Activated B cell treated with CpG ODN at 0.5 μM for 24 hours (primary cell): ENCODE measurements at regions of chr12 and their contacts with region 1.

Region 1: GRCh38 chr12:87280356-87280755 is 748.8 kb downstream of the C12orf50 start:
- DNase-seq: no peak
- ATAC-seq: peak; percentile 80
- H3K4me3 Mint-ChIP-seq: peak overlapping the region; percentile 25
- H3K27ac Mint-ChIP-seq: peak overlapping the region; percentile 76
- H3K4me1 Mint-ChIP-seq: peaks cover 10% of the 10 kb centered on the region
- H3K27me3 Mint-ChIP-seq: no peaks in the 10 kb centered on the region
- CTCF ChIP-seq: no peak

Region 2: DNA sequence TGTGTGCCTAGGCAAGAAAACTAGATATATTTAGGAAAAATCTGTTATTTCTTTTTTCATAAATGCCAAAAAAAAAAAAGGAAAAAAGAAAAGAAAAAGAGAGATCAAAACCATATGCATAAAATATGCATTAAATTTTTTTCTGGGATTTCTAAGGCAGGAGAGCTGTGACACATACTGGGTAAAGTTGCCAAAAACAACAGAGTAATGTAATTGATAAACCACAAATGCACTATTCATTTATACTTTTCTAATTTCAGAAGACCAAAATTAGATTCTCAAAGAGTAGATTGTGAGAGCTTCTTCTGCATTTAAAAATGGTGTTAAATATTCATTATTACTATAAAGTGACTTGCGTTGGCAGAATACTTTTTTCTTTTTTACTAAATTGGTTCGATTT is 350.4 kb before region 1 on chr12:
- CTCF ChIA-PET with region 1: no interaction called
- POLR2A ChIA-PET with region 1: no interaction called
- intact Hi-C with region 1: no loop called
- DNase-seq: no peak
- ATAC-seq: no peak
- H3K4me3 Mint-ChIP-seq: no peak overlapping the region
- H3K27ac Mint-ChIP-seq: no peak overlapping the region
- H3K4me1 Mint-ChIP-seq: no peaks in the 10 kb centered on the region
- H3K27me3 Mint-ChIP-seq: no peaks in the 10 kb centered on the region
- CTCF ChIP-seq: no peak

Region 3: DNA sequence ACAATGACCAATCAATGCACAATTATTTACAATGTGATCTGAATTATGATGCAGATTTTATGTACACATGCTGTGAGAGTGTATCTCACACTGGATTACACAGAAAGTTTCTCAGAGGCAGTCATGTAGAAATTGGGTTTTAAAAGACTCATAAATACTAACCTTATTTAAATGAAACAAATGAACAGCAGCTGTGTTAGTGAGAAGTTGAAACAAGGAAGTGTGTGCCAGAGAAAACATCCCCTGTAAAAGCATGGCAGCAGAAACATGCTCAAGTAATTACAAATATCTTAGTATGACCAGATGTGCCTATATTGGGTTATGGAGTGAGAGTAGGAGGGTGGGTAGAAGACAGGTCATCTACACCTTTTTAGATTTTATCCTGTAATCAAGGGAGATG is 25.1 kb after region 1 on chr12:
- CTCF ChIA-PET with region 1: no interaction called
- POLR2A ChIA-PET with region 1: no interaction called
- intact Hi-C with region 1: loop called (anchors 2 kb)
- DNase-seq: no peak
- ATAC-seq: peak; percentile 42
- H3K4me3 Mint-ChIP-seq: no peak overlapping the region
- H3K27ac Mint-ChIP-seq: peak overlapping the region; percentile 24
- H3K4me1 Mint-ChIP-seq: peaks cover 31% of the 10 kb centered on the region
- H3K27me3 Mint-ChIP-seq: no peaks in the 10 kb centered on the region
- CTCF ChIP-seq: no peak

Region 4: GRCh38 chr12:88153959-88154358 is 873.6 kb after region 1 on chr12:
- CTCF ChIA-PET with region 1: no interaction called
- POLR2A ChIA-PET with region 1: no interaction called
- intact Hi-C with region 1: no loop called
- DNase-seq: no peak
- ATAC-seq: no peak
- H3K4me3 Mint-ChIP-seq: no peak overlapping the region
- H3K27ac Mint-ChIP-seq: no peak overlapping the region
- H3K4me1 Mint-ChIP-seq: no peaks in the 10 kb centered on the region
- H3K27me3 Mint-ChIP-seq: no peaks in the 10 kb centered on the region
- CTCF ChIP-seq: no peak